ENCODE measurements at regions of chr11 and their contacts with region 1.

Region 1: DNA sequence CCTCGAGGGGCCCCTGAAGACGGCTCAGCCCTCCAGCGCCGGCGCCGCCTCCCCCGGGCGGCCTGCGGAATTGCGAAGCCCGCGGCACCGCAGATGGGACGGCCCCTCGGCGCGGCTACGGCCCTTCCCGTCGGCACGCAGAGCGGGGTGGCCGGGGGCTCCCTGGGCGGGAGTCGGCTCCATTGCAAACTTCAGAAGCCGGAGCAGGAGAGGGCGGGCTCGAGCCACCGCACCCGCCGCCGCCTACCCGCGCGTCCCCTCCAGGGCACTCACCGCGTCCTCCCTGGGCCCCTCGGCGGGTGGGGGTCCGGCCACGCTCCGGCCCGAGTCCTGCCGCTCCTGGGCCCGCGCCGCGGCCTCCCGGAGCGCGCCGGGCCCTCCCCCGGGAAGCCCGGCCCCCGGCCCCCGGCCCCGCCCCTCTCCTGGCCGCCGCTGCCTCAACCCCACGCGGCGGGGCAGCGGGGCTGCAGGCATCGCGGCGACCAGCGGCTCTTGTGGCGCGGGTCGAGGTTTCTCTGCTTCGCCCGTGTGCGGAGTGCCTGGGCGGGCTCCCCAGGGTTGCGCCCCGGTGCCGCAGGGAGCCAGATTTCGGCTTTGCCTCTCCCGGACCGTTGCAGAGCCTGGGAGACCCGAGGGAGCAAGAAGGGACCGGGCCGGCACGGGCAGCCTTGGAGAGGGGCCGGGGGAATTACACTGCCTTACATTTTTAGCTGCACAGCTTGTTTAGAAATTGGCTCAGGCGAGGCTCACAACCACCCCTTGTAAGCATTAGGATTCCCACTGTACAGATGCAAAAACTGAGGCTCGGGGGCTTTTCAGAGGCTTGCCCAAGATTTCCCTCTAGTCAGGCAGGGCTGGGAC is at the start of gene PACSIN3:
- DNase-seq: no peak
- ATAC-seq: peak; percentile 75
- H3K4me3 ChIP-seq: peak within 1 kb of the TSS; percentile 58 to 94
- H3K27ac ChIP-seq: peak within 1 kb of the TSS; percentile 96
- H3K4me1 ChIP-seq: peaks cover 18 to 42% of the 10 kb centered on the region in 2 experiments
- H3K27me3 ChIP-seq: no peaks in the 10 kb centered on the region
- CTCF ChIP-seq: no peak
- POLR2A ChIP-seq: peak; percentile 32
- RAD21 ChIP-seq: no peak
- total RNA-seq, gene PACSIN3: 63.1 TPM

Region 2: DNA sequence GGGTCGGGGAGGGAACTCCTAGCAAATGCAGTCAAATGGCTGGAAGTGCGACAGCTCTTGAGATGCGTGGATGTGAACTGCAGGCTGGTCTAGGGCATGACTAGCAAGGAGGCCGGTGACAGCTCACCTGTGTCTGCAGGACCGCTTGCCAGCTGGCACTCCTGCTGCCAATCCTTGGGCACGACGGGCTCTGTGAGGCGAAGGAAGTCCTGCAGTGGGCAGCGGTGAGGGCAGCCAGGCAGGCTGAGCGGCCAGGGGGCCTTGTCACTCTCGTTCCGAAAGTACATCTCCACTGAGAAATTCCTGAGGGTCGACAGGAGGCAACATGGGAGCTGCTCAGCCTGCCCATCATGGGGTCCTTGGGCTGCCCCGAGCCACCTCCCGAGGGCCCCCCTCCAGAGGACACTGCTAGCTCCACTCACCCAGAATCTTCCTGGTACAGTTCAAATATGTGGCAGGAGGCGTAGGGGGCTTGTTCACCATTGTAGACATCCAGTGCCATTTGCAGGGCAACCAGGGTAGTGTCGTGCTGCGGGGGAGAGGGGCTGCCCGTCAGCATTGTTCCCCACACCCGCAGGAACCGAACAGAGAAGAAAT is 56.4 kb after region 1 on chr11:
- CTCF ChIA-PET with region 1: no interaction called
- POLR2A ChIA-PET with region 1: no interaction called
- RAD21 ChIA-PET with region 1: no interaction called
- intact Hi-C with region 1: no loop called
- DNase-seq: no peak
- ATAC-seq: no peak
- H3K4me3 ChIP-seq: no peak overlapping the region
- H3K27ac ChIP-seq: no peak overlapping the region
- H3K4me1 ChIP-seq: peaks cover 1 to 4% of the 10 kb centered on the region in 2 experiments; a peak in 2 of 4 replicates
- H3K27me3 ChIP-seq: no peaks in the 10 kb centered on the region
- CTCF ChIP-seq: no peak
- POLR2A ChIP-seq: no peak
- RAD21 ChIP-seq: no peak

Region 3: GRCh38 chr11:47259178-47259977 is 73.1 kb after region 1 on chr11:
- CTCF ChIA-PET with region 1: interaction called, 18 read pairs
- POLR2A ChIA-PET with region 1: no interaction called
- RAD21 ChIA-PET with region 1: no interaction called
- intact Hi-C with region 1: no loop called
- DNase-seq: no peak
- ATAC-seq: peak; percentile 88
- H3K4me3 ChIP-seq: no peak overlapping the region
- H3K27ac ChIP-seq: no peak overlapping the region
- H3K4me1 ChIP-seq: peaks cover 7 to 10% of the 10 kb centered on the region in 2 experiments
- H3K27me3 ChIP-seq: no peaks in the 10 kb centered on the region
- CTCF ChIP-seq: peak; percentile 63 to 69 (median 68)
- POLR2A ChIP-seq: no peak
- RAD21 ChIP-seq: peak; percentile 69